ENCODE measurements at regions of chr12 and their contacts with region 1.

Region 1: DNA sequence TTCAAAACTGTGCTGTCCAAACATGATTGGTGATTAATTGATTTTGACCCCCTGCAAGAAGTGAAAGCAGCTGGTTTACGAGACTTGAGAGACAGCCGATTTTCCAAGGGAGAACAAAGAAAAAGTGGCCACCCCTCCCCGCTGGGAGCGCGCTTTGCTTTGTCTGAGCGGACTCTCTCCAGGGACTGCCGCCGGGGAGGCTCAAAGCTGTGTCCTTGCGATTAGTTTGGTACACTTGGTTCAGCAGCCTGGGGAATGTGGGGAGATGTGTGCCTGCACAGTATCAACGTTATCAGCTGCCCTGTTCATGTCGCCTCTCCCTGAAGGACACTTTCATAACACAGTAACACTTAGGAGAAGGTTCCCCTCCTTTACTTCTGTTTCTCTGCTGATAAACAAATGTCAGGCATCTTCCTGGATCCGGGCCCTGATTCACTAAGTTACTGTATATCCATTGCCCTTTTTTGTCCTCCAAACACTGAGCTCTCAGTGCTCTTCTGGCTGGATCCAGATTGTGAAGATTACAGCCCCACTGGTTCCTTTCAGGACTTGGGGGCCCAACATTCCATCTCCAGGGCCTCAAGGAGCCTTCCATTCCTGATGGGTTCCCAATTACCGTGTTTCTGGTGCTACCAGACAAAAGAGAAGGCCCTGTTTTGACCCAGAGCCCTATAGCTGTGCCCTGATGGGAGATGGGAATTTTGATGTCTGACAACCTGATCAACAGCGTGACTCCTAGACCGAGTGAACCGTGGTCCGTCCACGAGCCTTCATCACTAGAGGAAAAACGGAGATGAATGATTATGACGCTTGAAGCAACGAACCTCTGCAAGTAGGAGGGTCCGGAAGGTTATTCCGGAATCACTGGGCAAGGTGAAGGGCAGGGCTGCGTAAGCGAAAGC is 31.7 kb upstream of the TUBA1C start:
- DNase-seq: no peak
- H3K4me3 Mint-ChIP-seq: peak overlapping the region; percentile 67
- H3K27ac Mint-ChIP-seq: peak overlapping the region; percentile 73
- H3K4me1 Mint-ChIP-seq: peaks cover 9% of the 10 kb centered on the region
- H3K27me3 Mint-ChIP-seq: peaks cover 13% of the 10 kb centered on the region

Region 2: GRCh38 chr12:49060237-49061156 is 172.7 kb before region 1 on chr12 and contains the start of gene KMT2D:
- intact Hi-C with region 1: loop called (anchors 1 kb)
- DNase-seq: peak; percentile 83
- H3K4me3 Mint-ChIP-seq: peak within 1 kb of the TSS; percentile 95
- H3K27ac Mint-ChIP-seq: peak within 1 kb of the TSS; percentile 95
- H3K4me1 Mint-ChIP-seq: peaks cover 48% of the 10 kb centered on the region
- H3K27me3 Mint-ChIP-seq: no peaks in the 10 kb centered on the region
- total RNA-seq, gene KMT2D: 107 and 109 TPM in 2 replicates

Region 3: GRCh38 chr12:49110464-49111155 is 122.6 kb before region 1 on chr12 and contains the start of gene LMBR1L:
- intact Hi-C with region 1: loop called (anchors 1 kb)
- DNase-seq: peak; percentile 93
- H3K4me3 Mint-ChIP-seq: peak within 1 kb of the TSS; percentile 93
- H3K27ac Mint-ChIP-seq: peak within 1 kb of the TSS; percentile 92
- H3K4me1 Mint-ChIP-seq: peaks cover 37% of the 10 kb centered on the region
- H3K27me3 Mint-ChIP-seq: no peaks in the 10 kb centered on the region
- total RNA-seq, gene LMBR1L: 50.4 and 52.5 TPM in 2 replicates

Region 4: GRCh38 chr12:49264738-49265515 is 31.7 kb after region 1 on chr12 and contains the start of gene TUBA1C:
- intact Hi-C with region 1: loop called (anchors 1 kb)
- DNase-seq: peak; percentile 92
- H3K4me3 Mint-ChIP-seq: peak within 1 kb of the TSS; percentile 99
- H3K27ac Mint-ChIP-seq: peak within 1 kb of the TSS; percentile 100
- H3K4me1 Mint-ChIP-seq: peaks cover 38% of the 10 kb centered on the region
- H3K27me3 Mint-ChIP-seq: no peaks in the 10 kb centered on the region
- total RNA-seq, gene TUBA1C: 261 and 270 TPM in 2 replicates

Region 5: GRCh38 chr12:49366652-49367380 is 133.6 kb after region 1 on chr12:
- intact Hi-C with region 1: loop called (anchors 1 kb)
- DNase-seq: peak; percentile 89
- H3K4me3 Mint-ChIP-seq: peak overlapping the region; percentile 87
- H3K27ac Mint-ChIP-seq: peak overlapping the region; percentile 94
- H3K4me1 Mint-ChIP-seq: peaks cover 48% of the 10 kb centered on the region
- H3K27me3 Mint-ChIP-seq: no peaks in the 10 kb centered on the region

Measured in activated T-helper 1 cell treated with anti-CD3 and anti-CD28 coated beads, Interleukin-12 subunit alpha, Interleukin-12 subunit beta, Interleukin-2, Interleukin-4 antibody, amounts not matched to agents 30 ng/mL and 10 ng/mL and 1 ng/mL, durations not matched to agents 14 hours and 24 hours and 36 hours (primary cell).